CD8-positive, alpha-beta T cell (primary cell): ENCODE measurements at regions of chrX and their contacts with region 1.

Region 1: DNA sequence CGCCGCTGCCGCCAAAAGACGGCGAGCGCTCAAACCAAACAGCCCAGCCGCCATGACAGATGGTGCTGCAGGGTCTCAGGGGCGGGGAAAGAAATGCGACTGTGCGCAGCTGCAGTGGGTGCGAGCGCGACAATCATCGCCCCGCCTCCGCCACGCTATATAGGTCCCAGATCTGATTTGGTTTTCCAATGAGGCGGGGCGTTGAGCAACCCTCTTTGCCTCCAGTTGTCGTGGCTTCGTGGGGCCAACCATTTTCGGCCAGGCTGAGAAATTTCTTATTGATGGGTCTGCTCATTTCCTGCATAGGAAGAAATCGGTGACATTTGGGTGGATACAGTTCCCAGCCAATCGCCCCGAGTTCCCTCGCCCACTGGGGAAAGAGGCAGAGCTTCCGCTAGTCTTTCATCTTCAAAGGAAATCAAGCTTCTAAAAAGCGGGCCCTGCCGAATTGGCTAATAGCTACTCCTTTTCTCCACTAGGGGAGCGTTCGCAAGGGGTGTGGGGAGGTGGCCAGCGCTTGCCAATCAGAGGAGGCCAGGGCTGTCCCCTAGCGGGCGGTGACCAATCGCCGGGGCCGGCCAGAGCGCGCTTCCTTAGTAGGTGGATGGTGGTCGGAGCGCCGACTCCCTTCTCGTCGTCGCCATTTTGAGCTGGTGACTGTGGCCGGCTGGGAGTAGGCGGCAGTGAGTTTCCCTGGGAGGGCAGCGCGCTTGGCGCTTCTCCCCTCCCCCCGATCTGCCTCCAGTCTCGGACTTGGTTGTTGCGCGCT is at the starts of genes NDUFB11 and RBM10:
- DNase-seq: peak; percentile 75 to 95 (median 88)
- ATAC-seq: peak; percentile 84
- H3K4me3 ChIP-seq: peak within 1 kb of the TSS; percentile 84 to 87
- H3K4me3 Mint-ChIP-seq: peak within 1 kb of the TSS; percentile 91
- H3K27ac ChIP-seq: peak within 1 kb of the TSS; percentile 82 to 94
- H3K27ac Mint-ChIP-seq: peak within 1 kb of the TSS; percentile 95
- H3K4me1 ChIP-seq: peaks cover 23% of the 10 kb centered on the region
- H3K4me1 Mint-ChIP-seq: peaks cover 45% of the 10 kb centered on the region
- H3K27me3 ChIP-seq: no peaks in the 10 kb centered on the region
- H3K27me3 Mint-ChIP-seq: no peaks in the 10 kb centered on the region
- CTCF ChIP-seq: peak; percentile 52
- total RNA-seq, gene NDUFB11: 50.5 to 51.4 TPM
- total RNA-seq, gene RBM10: 31.9 to 32.0 TPM

Region 2: GRCh38 chrX:47078129-47079043 is 66.4 kb before region 1 on chrX and contains the start of gene RGN:
- CTCF ChIA-PET with region 1: no interaction called
- POLR2A ChIA-PET with region 1: no interaction called
- intact Hi-C with region 1: no loop called
- DNase-seq: no peak
- ATAC-seq: no peak
- H3K4me3 ChIP-seq: no peak within 1 kb of the TSS
- H3K4me3 Mint-ChIP-seq: no peak within 1 kb of the TSS
- H3K27ac ChIP-seq: no peak within 1 kb of the TSS
- H3K27ac Mint-ChIP-seq: no peak within 1 kb of the TSS
- H3K4me1 ChIP-seq: no peaks in the 10 kb centered on the region
- H3K4me1 Mint-ChIP-seq: no peaks in the 10 kb centered on the region
- H3K27me3 ChIP-seq: no peaks in the 10 kb centered on the region
- H3K27me3 Mint-ChIP-seq: no peaks in the 10 kb centered on the region
- CTCF ChIP-seq: no peak
- total RNA-seq, gene RGN: not detected

Region 3: GRCh38 chrX:47129157-47129898 is 15.5 kb before region 1 on chrX:
- CTCF ChIA-PET with region 1: interaction called, 8 read pairs
- POLR2A ChIA-PET with region 1: interaction called, 16 read pairs
- intact Hi-C with region 1: loop called (anchors 1 kb)
- DNase-seq: peak; percentile 76 to 95 (median 86)
- ATAC-seq: peak; percentile 98
- H3K4me3 ChIP-seq: peak overlapping the region; percentile 74 to 80
- H3K4me3 Mint-ChIP-seq: peak overlapping the region; percentile 97
- H3K27ac ChIP-seq: peak overlapping the region; percentile 73 to 85
- H3K27ac Mint-ChIP-seq: peak overlapping the region; percentile 98
- H3K4me1 ChIP-seq: no peaks in the 10 kb centered on the region
- H3K4me1 Mint-ChIP-seq: peaks cover 4% of the 10 kb centered on the region
- H3K27me3 ChIP-seq: no peaks in the 10 kb centered on the region
- H3K27me3 Mint-ChIP-seq: no peaks in the 10 kb centered on the region
- CTCF ChIP-seq: no peak

Region 4: GRCh38 chrX:47187106-47187677 is 42.4 kb after region 1 on chrX:
- CTCF ChIA-PET with region 1: no interaction called
- POLR2A ChIA-PET with region 1: interaction called, 11 read pairs
- intact Hi-C with region 1: loop called (anchors 5 kb)
- DNase-seq: no peak
- ATAC-seq: no peak
- H3K4me3 ChIP-seq: no peak overlapping the region
- H3K4me3 Mint-ChIP-seq: no peak overlapping the region
- H3K27ac ChIP-seq: no peak overlapping the region
- H3K27ac Mint-ChIP-seq: no peak overlapping the region
- H3K4me1 ChIP-seq: peaks cover 7% of the 10 kb centered on the region
- H3K4me1 Mint-ChIP-seq: peaks cover 9% of the 10 kb centered on the region
- H3K27me3 ChIP-seq: no peaks in the 10 kb centered on the region
- H3K27me3 Mint-ChIP-seq: no peaks in the 10 kb centered on the region
- CTCF ChIP-seq: no peak

Region 5: GRCh38 chrX:47217642-47218279 is 73.0 kb after region 1 on chrX:
- CTCF ChIA-PET with region 1: no interaction called
- POLR2A ChIA-PET with region 1: interaction called, 6 read pairs
- intact Hi-C with region 1: loop called in 1 of 2 experiments (anchors 1 kb)
- DNase-seq: peak; percentile 83 to 98 (median 96)
- ATAC-seq: peak; percentile 80
- H3K4me3 ChIP-seq: peak overlapping the region; percentile 79
- H3K4me3 Mint-ChIP-seq: peak overlapping the region; percentile 93
- H3K27ac ChIP-seq: peak overlapping the region; percentile 98 to 100
- H3K27ac Mint-ChIP-seq: peak overlapping the region; percentile 98
- H3K4me1 ChIP-seq: peaks cover 26% of the 10 kb centered on the region
- H3K4me1 Mint-ChIP-seq: peaks cover 35% of the 10 kb centered on the region
- H3K27me3 ChIP-seq: no peaks in the 10 kb centered on the region
- H3K27me3 Mint-ChIP-seq: no peaks in the 10 kb centered on the region
- CTCF ChIP-seq: no peak

Region 6: DNA sequence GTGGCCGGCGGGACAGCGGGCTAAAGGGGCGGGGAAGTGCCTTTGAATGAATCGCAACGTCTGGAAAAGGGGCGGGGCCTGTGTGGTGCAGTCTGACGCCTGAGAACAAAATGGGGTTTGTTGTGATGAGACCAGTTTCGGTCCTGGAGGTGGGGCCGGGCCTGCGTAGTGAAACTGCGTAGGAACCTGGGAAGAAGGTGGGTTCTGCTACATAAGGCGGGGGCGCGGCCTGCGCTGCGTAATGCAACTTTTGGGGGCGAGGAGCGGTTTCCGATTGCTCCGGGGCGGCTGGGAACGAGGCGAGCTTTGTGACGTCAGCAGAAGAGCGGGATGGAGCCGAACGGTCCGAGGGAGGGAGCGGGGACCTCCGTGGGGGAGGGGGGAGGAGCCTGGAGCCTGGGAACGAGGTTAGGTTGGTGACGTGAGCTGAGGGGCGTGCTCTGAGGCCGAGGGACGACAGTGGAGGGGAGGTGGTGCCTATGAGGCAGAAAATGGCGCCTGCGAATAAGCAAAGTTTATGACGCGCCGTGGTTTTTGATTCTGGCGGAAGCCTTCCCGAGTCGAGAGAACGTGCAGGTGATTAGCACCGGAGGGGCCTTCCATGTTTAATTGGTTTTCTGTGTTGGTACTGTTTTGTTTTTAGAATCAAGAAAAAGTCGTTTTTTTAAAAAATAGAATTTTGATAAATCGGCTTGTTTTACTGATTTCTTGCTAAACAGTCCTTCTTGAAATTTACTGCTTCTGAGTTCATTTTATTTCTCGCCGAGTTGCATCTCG is 88.7 kb after region 1 on chrX:
- CTCF ChIA-PET with region 1: no interaction called
- POLR2A ChIA-PET with region 1: interaction called, 20 read pairs
- intact Hi-C with region 1: loop called in 1 of 2 experiments (anchors 1 kb)
- DNase-seq: peak; percentile 81 to 98 (median 95)
- ATAC-seq: peak; percentile 89
- H3K4me3 ChIP-seq: peak overlapping the region; percentile 77 to 96
- H3K4me3 Mint-ChIP-seq: peak overlapping the region; percentile 96
- H3K27ac ChIP-seq: peak overlapping the region; percentile 100
- H3K27ac Mint-ChIP-seq: peak overlapping the region; percentile 99
- H3K4me1 ChIP-seq: peaks cover 34% of the 10 kb centered on the region
- H3K4me1 Mint-ChIP-seq: peaks cover 40% of the 10 kb centered on the region
- H3K27me3 ChIP-seq: no peaks in the 10 kb centered on the region
- H3K27me3 Mint-ChIP-seq: no peaks in the 10 kb centered on the region
- CTCF ChIP-seq: no peak

Region 7: DNA sequence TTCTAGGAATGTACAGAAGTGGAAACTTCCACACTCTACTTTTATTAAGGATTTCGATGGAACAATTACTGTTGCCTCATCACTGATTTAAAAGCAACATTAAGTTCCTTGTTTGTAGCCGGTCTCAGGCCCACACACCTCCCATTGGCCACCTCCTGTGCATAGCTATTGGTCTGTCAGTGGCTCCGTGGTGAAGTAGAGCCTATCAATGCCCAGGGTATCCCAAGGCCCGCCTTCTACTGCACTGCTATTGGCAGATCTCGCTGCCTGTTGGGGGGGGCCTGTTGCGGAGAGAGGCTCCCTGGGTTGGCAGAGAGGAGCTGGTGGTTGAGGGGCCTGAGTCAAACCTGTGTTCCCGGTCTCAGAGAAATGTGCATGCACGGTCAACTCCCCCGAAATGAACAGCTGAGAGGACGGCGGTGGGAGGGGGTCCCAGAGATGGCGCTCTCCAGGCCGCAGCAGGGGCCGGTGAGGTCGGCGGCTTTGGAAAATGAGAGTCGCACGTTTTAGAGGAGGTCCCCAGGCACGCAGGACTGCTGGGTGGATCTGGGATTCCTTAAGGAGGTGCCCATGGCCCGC is 411.3 kb after region 1 on chrX:
- CTCF ChIA-PET with region 1: no interaction called
- POLR2A ChIA-PET with region 1: no interaction called
- intact Hi-C with region 1: no loop called
- DNase-seq: peak; percentile 59 to 92 (median 83)
- ATAC-seq: peak; percentile 83
- H3K4me3 ChIP-seq: peak overlapping the region; percentile 55 to 59
- H3K4me3 Mint-ChIP-seq: peak overlapping the region; percentile 91
- H3K27ac ChIP-seq: peak overlapping the region; percentile 37 to 71
- H3K27ac Mint-ChIP-seq: peak overlapping the region; percentile 97
- H3K4me1 ChIP-seq: peaks cover 8% of the 10 kb centered on the region
- H3K4me1 Mint-ChIP-seq: peaks cover 22% of the 10 kb centered on the region
- H3K27me3 ChIP-seq: no peaks in the 10 kb centered on the region
- H3K27me3 Mint-ChIP-seq: no peaks in the 10 kb centered on the region
- CTCF ChIP-seq: no peak

Region 8: DNA sequence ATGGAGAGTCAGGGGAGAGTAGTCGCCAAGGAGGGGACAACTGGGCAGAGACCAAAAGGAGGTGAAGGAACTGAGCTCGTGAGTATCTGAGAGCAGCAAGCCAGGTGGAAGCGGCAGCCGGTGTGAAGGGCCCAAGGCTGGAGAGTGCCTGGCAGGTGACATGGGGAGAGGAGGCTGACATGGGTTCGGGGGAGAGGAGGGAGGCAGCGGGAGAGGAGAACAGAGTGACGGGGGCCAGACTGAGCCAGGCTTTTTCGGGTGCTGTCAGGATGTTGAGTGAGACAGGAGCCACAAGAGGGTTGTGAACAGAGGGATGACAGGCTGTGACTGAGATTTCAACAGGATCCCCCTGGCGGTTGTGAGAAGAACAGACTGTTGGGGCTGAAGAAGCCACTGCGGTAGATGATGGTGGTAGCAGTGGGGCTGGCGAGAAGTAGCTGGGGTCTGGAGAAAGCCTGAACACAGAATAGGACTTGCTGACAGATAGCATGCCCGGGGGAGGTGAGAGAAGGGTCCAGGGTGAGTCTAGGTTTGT is 499.8 kb after region 1 on chrX:
- CTCF ChIA-PET with region 1: no interaction called
- POLR2A ChIA-PET with region 1: no interaction called
- intact Hi-C with region 1: loop called in 1 of 2 experiments (anchors 10 kb)
- DNase-seq: peak in 1 of 9 experiments; percentile 33
- ATAC-seq: peak; percentile 42
- H3K4me3 ChIP-seq: no peak overlapping the region
- H3K4me3 Mint-ChIP-seq: no peak overlapping the region
- H3K27ac ChIP-seq: no peak overlapping the region
- H3K27ac Mint-ChIP-seq: no peak overlapping the region
- H3K4me1 ChIP-seq: peaks cover 19% of the 10 kb centered on the region
- H3K4me1 Mint-ChIP-seq: peaks cover 48% of the 10 kb centered on the region
- H3K27me3 ChIP-seq: no peaks in the 10 kb centered on the region
- H3K27me3 Mint-ChIP-seq: no peaks in the 10 kb centered on the region
- CTCF ChIP-seq: no peak